ENCODE measurements at regions of chr4 and their contacts with region 1.

Region 1: GRCh38 chr4:88284439-88285234 is at the start of gene PPM1K:
- DNase-seq: peak; percentile 99
- H3K4me3 Mint-ChIP-seq: peak within 1 kb of the TSS; percentile 99
- H3K27ac Mint-ChIP-seq: peak within 1 kb of the TSS; percentile 100
- H3K4me1 Mint-ChIP-seq: peaks cover 38% of the 10 kb centered on the region
- H3K27me3 Mint-ChIP-seq: no peaks in the 10 kb centered on the region
- total RNA-seq, gene PPM1K: 38.5 and 39.9 TPM in 2 replicates

Region 2: GRCh38 chr4:86934771-86935565 is 1349.7 kb before region 1 on chr4 and contains the start of gene AFF1:
- intact Hi-C with region 1: loop called (anchors 5 kb)
- DNase-seq: peak; percentile 85
- H3K4me3 Mint-ChIP-seq: peak within 1 kb of the TSS; percentile 93
- H3K27ac Mint-ChIP-seq: peak within 1 kb of the TSS; percentile 96
- H3K4me1 Mint-ChIP-seq: peaks cover 49% of the 10 kb centered on the region
- H3K27me3 Mint-ChIP-seq: no peaks in the 10 kb centered on the region
- total RNA-seq, gene AFF1: 60.4 and 63.0 TPM in 2 replicates

Region 3: GRCh38 chr4:88158489-88159243 is 126.0 kb before region 1 on chr4 and contains the start of gene ABCG2:
- intact Hi-C with region 1: loop called (anchors 2 kb)
- DNase-seq: peak; percentile 46
- H3K4me3 Mint-ChIP-seq: peak within 1 kb of the TSS; percentile 77
- H3K27ac Mint-ChIP-seq: peak within 1 kb of the TSS; percentile 66
- H3K4me1 Mint-ChIP-seq: peaks cover 14% of the 10 kb centered on the region
- H3K27me3 Mint-ChIP-seq: peaks cover 13% of the 10 kb centered on the region
- total RNA-seq, gene ABCG2: 0.48 and 0.89 TPM in 2 replicates

Region 4: GRCh38 chr4:88378691-88379559 is 94.3 kb after region 1 on chr4 and contains the start of gene HERC6:
- intact Hi-C with region 1: loop called (anchors 2 kb)
- DNase-seq: peak; percentile 83
- H3K4me3 Mint-ChIP-seq: peak within 1 kb of the TSS; percentile 83
- H3K27ac Mint-ChIP-seq: peak within 1 kb of the TSS; percentile 71
- H3K4me1 Mint-ChIP-seq: peaks cover 32% of the 10 kb centered on the region
- H3K27me3 Mint-ChIP-seq: no peaks in the 10 kb centered on the region
- total RNA-seq, gene HERC6: 3.3 and 3.7 TPM in 2 replicates

Region 5: GRCh38 chr4:88442703-88443191 is 158.1 kb after region 1 on chr4:
- intact Hi-C with region 1: no loop called
- DNase-seq: no peak
- H3K4me3 Mint-ChIP-seq: no peak overlapping the region
- H3K27ac Mint-ChIP-seq: no peak overlapping the region
- H3K4me1 Mint-ChIP-seq: peaks cover 2% of the 10 kb centered on the region
- H3K27me3 Mint-ChIP-seq: no peaks in the 10 kb centered on the region

Region 6: GRCh38 chr4:88523325-88524129 is 238.9 kb after region 1 on chr4 and contains the start of gene PYURF:
- intact Hi-C with region 1: loop called (anchors 1 kb)
- DNase-seq: peak; percentile 67
- H3K4me3 Mint-ChIP-seq: peak within 1 kb of the TSS; percentile 98
- H3K27ac Mint-ChIP-seq: peak within 1 kb of the TSS; percentile 96
- H3K4me1 Mint-ChIP-seq: peaks cover 49% of the 10 kb centered on the region
- H3K27me3 Mint-ChIP-seq: no peaks in the 10 kb centered on the region
- total RNA-seq, gene PYURF: 51.2 and 52.8 TPM in 2 replicates

Measured in activated T-helper 2 cell treated with anti-CD3 and anti-CD28 coated beads, Interferon-gamma antibody, Interleukin-2, Interleukin-4, amounts not matched to agents 10 μg/mL and 5 μg/mL and 100 μg/mL, durations not matched to agents 14 hours and 24 hours and 36 hours (primary cell).